WTC11 (cell line): ENCODE measurements at regions of chr3 and their contacts with region 1.

Region 1: GRCh38 chr3:195863121-195864006 is 45.0 kb downstream of the TNK2 start:
- DNase-seq: peak; percentile 91
- ATAC-seq: peak; percentile 87
- H3K4me3 Mint-ChIP-seq: no peak overlapping the region
- H3K27ac Mint-ChIP-seq: peak overlapping the region; percentile 60; the same call in 1 of the 2 replicates
- H3K4me1 Mint-ChIP-seq: peaks cover 20% of the 10 kb centered on the region
- H3K27me3 Mint-ChIP-seq: no peaks in the 10 kb centered on the region
- CTCF ChIP-seq: peak; percentile 73

Region 2: GRCh38 chr3:195839282-195840010 is 23.9 kb before region 1 on chr3:
- CTCF ChIA-PET with region 1: interaction called, 12 read pairs
- POLR2A ChIA-PET with region 1: no interaction called
- DNase-seq: no peak
- ATAC-seq: peak; percentile 38
- H3K4me3 Mint-ChIP-seq: no peak overlapping the region
- H3K27ac Mint-ChIP-seq: 0 out of 2 replicates have a peak overlapping the region, but pooled peaks have one; percentile 34
- H3K4me1 Mint-ChIP-seq: peaks cover 10% of the 10 kb centered on the region
- H3K27me3 Mint-ChIP-seq: no peaks in the 10 kb centered on the region
- CTCF ChIP-seq: no peak

Region 3: DNA sequence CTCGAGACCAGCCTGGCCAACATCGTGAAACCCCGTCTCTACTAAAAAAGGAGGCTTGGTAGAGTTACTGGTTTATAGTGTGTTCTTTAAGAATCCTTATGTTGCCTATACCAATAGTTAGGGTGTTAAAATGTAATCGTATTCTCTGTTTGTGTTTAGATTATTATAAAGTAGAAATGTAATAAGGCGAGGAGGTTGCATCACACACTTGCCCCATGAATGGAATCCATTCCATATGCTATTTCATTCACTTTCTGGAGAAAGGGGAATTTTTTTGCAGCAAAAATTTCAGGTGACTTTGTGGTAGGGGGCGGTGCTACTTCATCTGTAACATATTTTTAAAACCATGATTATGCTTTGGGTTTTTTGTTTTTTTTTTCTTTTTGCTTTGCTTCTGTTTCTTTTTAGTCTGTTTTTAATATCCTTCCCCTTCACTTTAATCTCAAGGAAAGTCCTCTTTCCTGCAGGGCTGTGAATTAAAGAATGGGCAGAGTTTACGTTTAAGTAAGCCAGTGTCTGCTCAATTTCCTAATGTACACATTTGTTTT is 18.6 kb before region 1 on chr3:
- CTCF ChIA-PET with region 1: interaction called, 30 read pairs
- POLR2A ChIA-PET with region 1: no interaction called
- DNase-seq: no peak
- ATAC-seq: no peak
- H3K4me3 Mint-ChIP-seq: no peak overlapping the region
- H3K27ac Mint-ChIP-seq: no peak overlapping the region
- H3K4me1 Mint-ChIP-seq: peaks cover 5% of the 10 kb centered on the region; the same call in 1 of the 2 replicates
- H3K27me3 Mint-ChIP-seq: no peaks in the 10 kb centered on the region
- CTCF ChIP-seq: no peak

Region 4: DNA sequence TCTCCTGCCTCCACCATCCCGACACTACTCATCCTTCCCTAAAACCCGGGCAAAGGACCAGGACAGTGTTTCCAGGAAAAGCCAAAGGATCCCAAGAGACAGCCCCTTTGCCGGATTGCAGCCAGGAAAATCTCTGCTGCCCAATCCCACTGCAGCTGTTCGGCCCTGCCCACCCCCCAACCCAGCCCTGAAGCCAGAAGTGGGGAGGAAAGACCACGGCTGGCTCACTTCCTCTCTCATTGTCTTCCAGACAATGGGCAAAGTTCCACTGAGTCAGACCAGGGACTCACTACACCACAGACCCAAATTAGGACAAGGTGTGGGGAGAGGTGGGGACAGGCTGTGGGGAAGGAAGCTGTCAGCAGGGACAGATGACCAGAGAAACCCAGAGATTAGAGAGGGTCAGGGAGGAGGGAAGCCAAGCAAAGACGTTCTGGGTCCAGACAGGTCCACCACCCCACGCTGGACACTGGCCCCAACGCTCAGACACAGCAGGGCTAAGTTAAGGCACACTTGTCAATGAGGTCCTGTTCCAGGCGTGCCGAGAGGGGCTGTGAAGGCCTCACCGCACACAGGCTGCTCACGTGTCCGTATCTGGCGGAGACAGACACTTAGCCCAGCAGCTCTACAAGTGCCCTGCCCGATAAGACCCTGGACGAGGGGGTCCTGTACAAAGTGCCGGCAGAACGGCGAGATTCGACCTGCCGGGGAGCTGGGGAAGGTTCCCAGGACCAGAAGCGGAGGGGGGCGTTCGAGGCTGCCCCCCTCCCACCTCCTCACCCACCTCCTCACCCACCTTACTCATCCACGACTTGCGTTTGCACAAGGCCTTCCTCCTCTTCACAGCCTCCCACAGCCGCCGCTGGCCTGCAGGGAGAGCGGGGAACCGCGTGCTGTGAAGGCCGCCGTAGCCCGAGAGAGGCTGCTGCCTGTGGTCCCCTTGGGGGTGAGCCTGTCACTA is 23.1 kb after region 1 on chr3:
- CTCF ChIA-PET with region 1: interaction called, 167 read pairs
- POLR2A ChIA-PET with region 1: no interaction called
- DNase-seq: no peak
- ATAC-seq: peak; percentile 23
- H3K4me3 Mint-ChIP-seq: no peak overlapping the region
- H3K27ac Mint-ChIP-seq: peak overlapping the region; percentile 83
- H3K4me1 Mint-ChIP-seq: peaks cover 40% of the 10 kb centered on the region
- H3K27me3 Mint-ChIP-seq: no peaks in the 10 kb centered on the region
- CTCF ChIP-seq: no peak

Region 5: GRCh38 chr3:195894780-195895607 is 31.6 kb after region 1 on chr3:
- CTCF ChIA-PET with region 1: interaction called, 167 read pairs
- POLR2A ChIA-PET with region 1: no interaction called
- DNase-seq: no peak
- ATAC-seq: peak; percentile 43
- H3K4me3 Mint-ChIP-seq: peak overlapping the region; percentile 83
- H3K27ac Mint-ChIP-seq: no peak overlapping the region
- H3K4me1 Mint-ChIP-seq: peaks cover 41% of the 10 kb centered on the region
- H3K27me3 Mint-ChIP-seq: no peaks in the 10 kb centered on the region
- CTCF ChIP-seq: peak; percentile 94

Region 6: DNA sequence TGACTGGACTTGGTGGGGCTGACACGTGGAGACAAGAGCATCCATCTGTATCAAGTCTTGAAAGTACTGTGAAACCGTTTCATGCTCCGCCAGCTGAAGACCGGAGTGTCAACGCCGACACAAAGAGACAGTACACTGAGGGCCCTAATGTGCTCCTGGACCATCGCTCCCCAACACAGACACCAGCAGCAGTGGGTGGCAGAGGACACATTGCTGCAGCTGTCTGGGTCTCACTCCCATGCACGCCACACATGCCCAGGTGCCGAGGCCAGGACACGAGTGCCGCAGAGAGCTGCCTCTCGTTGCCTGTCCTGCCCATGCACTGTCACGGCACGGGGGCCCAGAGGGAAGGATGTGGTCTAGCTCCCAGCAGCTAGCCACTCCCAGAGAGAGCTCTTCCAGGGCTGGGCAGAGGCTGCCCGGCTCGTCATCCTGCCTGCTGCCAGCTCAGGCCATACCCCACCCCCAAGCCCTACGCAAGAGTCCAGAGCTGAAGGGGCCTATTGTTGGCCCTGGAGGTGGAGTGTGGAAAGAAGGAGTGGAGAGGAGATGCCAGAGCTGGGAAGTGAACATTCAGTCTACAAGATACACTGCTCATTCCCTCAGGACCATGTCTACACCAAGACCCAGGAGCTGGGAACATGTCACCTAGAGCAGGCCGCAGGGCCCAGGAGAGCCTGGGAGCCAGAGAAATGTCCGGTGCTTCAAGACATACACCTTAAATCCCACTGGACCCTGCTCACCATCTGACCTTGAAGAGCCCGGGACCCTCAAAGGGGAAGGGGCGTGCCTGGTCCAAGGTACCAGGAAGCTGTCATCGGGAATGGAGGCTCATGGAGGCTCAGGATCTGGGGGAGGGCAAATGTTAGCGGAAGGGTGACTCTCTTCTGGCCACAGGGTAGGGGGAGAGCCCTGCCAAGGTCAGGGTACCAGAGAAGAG is 37.3 kb after region 1 on chr3:
- CTCF ChIA-PET with region 1: interaction called, 167 read pairs
- POLR2A ChIA-PET with region 1: no interaction called
- DNase-seq: no peak
- ATAC-seq: no peak
- H3K4me3 Mint-ChIP-seq: no peak overlapping the region
- H3K27ac Mint-ChIP-seq: no peak overlapping the region; the same call in 1 of the 2 replicates
- H3K4me1 Mint-ChIP-seq: peaks cover 25% of the 10 kb centered on the region
- H3K27me3 Mint-ChIP-seq: no peaks in the 10 kb centered on the region
- CTCF ChIP-seq: no peak

Region 7: GRCh38 chr3:195909644-195910508 is 46.5 kb after region 1 on chr3:
- CTCF ChIA-PET with region 1: interaction called, 27 read pairs
- POLR2A ChIA-PET with region 1: interaction called, 4 read pairs
- DNase-seq: peak; percentile 79
- ATAC-seq: peak; percentile 58
- H3K4me3 Mint-ChIP-seq: peak overlapping the region; percentile 76
- H3K27ac Mint-ChIP-seq: peak overlapping the region; percentile 23; the same call in 1 of the 2 replicates
- H3K4me1 Mint-ChIP-seq: peaks cover 45% of the 10 kb centered on the region
- H3K27me3 Mint-ChIP-seq: peaks cover 9% of the 10 kb centered on the region; the same call in 1 of the 2 replicates
- CTCF ChIP-seq: no peak

Region 8: DNA sequence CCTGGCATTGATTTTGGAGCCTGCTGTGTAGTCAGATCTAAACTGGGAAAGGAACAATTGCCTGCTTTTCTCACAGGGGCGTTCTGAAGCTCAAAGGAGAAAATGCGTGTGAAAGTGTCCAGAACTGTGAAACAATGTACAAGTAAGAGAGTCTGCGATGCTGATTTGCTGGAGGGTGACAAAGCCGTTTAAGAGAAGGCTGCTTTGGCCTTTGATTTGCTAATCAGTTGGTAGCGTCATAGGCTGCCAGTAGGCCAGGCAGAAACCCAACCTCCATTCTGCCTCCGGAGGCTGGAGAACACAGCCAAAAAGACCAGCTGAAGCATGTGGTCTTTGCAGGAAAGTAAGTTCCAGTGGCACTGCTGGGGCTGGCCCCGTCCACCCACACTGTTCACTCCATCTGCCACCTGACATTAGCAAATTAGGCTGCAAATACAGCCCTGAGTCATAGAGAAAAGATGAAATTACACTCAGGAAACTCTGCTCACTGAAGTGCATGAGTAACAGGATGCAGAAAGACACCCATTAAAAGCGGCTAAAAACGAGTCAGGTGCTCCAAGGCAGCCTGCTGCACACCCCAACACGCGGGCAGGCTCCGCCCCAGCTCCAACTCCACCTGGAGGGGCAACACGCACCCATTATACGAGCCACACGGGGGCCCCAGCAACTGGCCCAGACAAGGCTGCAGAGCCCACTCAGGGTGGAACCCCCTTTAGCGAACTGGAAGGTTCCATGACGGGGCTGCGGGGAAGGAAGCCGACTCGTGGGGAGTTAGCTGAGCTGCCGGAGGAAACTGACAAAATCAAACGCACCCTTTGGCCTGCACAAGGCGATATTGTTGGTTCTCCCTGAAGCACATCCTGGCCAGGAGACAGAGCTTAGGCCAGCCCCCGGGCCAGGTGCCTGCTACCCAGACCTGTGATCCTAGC is 316.3 kb after region 1 on chr3:
- CTCF ChIA-PET with region 1: no interaction called
- POLR2A ChIA-PET with region 1: no interaction called
- DNase-seq: peak; percentile 43
- ATAC-seq: peak; percentile 84
- H3K4me3 Mint-ChIP-seq: peak overlapping the region; percentile 15
- H3K27ac Mint-ChIP-seq: peak overlapping the region; percentile 90
- H3K4me1 Mint-ChIP-seq: peaks cover 25% of the 10 kb centered on the region
- H3K27me3 Mint-ChIP-seq: no peaks in the 10 kb centered on the region
- CTCF ChIP-seq: no peak